Activated CD8-positive, alpha-beta memory T cell treated with anti-CD3 and anti-CD28 coated beads, Interleukin-2, amount 10 ng/mL, durations not matched to agents 7 days and 5 days (primary cell): ENCODE measurements at regions of chr7 and their contacts with region 1.

Region 1: GRCh38 chr7:39746103-39746819 is 122.9 kb downstream of the RALA start:
- DNase-seq: peak; percentile 62
- ATAC-seq: peak; percentile 51
- H3K4me3 Mint-ChIP-seq: no peak overlapping the region
- H3K27ac Mint-ChIP-seq: no peak overlapping the region
- H3K4me1 Mint-ChIP-seq: peaks cover 4% of the 10 kb centered on the region
- H3K27me3 Mint-ChIP-seq: no peaks in the 10 kb centered on the region

Region 2: DNA sequence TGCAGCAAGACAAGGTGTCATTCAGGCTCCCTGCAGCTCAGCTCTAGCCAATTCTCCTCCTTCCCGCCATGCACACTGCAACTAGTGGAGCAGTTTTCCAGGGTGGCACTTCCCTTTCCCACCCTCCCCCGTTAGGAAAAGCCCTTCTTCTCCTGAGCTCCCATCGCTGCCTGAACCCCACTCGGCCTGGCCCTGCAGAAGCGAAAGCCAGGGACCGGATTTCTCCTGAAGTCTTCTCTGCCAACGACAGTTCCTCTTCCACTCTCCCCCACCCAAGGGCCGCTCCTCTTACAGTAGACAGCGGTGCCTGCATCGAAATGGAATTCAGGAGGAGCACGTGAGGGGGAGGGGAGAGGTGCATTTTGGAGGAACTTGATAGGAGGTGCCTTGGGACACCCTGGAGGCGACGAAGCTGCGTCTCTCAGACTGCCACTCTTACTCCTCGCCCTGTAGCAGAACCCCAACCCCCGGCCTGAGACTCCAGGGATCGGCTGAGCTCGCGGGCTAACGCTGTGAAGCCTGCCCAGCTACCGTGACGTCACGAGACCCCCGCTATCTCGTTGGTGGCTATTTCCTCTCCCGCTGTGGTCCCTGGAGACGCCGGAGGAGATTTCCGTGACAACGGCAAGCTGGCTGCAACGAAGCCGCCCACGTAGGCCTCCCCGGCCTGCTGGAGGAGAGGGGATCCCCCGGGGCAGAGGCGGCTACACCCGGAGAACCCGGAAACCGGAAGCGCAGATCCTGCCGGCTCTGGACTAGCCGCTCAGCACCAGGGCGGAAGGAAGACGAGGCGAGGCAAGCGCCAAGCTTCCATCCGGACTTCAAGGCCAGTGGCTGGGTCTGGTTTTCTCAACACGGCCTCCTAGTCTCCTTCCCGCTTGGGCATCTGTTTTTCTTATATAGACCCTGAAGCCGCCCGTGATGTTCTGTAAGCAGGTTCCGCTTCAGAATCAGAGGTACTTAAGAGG is 13.1 kb before region 1 on chr7:
- CTCF ChIA-PET with region 1: interaction called, 40 read pairs
- DNase-seq: peak; percentile 97
- ATAC-seq: peak; percentile 96
- H3K4me3 Mint-ChIP-seq: peak overlapping the region; percentile 76
- H3K27ac Mint-ChIP-seq: peak overlapping the region; percentile 95
- H3K4me1 Mint-ChIP-seq: peaks cover 36% of the 10 kb centered on the region
- H3K27me3 Mint-ChIP-seq: no peaks in the 10 kb centered on the region